ENCODE measurements at regions of chr4 and their contacts with region 1.

Region 1: DNA sequence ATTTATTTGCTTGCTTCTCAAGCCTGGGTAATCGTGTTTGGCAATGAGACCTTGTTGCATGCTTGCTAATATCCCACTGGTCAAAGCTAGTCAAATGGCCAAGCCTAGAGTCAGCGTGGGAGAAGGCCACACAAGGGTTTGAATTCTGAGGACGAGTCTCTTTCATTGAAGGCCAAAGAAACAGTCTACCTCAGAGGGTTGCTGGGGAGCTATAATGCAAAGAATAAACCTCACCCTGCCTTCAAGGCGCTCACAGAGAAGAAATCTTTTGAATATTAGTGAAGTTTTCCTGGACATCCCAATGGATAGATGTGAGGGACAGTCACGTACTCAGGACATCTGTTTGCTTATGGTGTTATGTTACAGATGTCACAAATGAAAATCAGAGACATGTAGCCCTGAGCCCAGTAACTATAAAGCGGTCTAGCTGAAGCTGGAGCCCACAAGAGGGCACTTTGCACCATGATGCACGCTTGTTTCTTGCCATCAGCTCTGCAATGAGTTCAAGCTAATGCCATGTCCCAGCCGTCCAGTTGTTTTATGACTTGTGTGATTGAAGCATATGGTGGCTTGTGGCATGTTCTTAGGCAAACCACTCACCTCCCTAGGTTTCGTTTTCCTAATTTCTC is 1.1 kb upstream of the TLR3 start:
- DNase-seq: peak in 1 of 2 experiments; percentile 70
- ATAC-seq: peak; percentile 95 to 98
- H3K4me3 ChIP-seq: peak overlapping the region; percentile 44; the same call in 2 of the 3 replicates
- H3K27ac ChIP-seq: no peak overlapping the region
- H3K4me1 ChIP-seq: no peaks in the 10 kb centered on the region
- CTCF ChIP-seq: peak; percentile 51
- EP300 ChIP-seq: no peak
- POLR2A ChIP-seq: no peak
- RAD21 ChIP-seq: peak; percentile 55 to 60

Region 2: DNA sequence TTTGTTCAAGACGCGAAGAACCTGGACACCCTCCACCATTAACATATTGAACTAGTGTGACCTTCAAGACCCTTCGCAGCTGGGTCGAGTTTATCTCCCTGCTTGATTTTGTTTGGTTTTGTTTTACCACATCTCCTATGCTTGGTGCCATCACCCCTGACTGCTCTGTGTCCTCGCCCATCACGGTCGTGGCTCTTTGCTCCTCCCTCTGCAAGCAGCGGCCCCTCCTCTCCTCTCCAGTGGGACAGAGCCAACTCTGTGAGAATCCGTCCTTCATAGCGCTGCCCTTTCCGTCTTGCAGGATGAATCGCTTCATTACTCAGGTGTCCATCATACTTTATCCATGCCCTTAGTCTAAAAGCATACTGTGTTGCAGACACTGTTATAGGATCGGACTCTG is 27.5 kb after region 1 on chr4:
- CTCF ChIA-PET with region 1: no interaction called
- POLR2A ChIA-PET with region 1: no interaction called
- DNase-seq: no peak
- ATAC-seq: no peak
- H3K4me3 ChIP-seq: no peak overlapping the region
- H3K27ac ChIP-seq: no peak overlapping the region
- H3K4me1 ChIP-seq: no peaks in the 10 kb centered on the region
- CTCF ChIP-seq: no peak
- EP300 ChIP-seq: no peak
- POLR2A ChIP-seq: no peak
- RAD21 ChIP-seq: no peak

Region 3: DNA sequence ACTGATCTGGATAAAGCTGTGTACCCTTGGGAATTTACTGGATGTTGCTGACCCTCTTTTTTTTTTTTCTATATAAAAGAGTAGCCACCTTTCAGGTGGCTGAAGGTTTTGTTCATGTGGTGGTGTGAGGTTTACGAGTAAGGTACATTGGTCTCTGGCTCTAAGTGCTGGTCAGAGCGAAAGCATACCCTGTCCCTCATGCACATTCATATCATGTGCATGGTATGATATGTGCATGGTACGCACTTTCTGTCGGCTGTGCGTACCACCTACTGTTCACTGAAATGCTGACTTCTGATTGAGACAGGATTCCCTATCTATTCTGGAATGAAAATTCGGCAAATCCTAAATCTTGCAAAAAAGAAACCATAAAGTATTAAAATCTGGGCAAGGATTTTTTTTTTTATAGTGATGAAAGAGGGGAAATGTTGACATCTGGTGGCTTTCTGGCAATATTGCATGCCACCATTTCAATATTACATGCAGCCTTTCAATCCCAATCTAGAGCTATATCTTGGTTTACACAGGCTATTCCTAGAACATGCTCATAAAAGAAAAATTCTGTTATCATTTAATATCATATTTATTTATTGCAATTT is 69.4 kb after region 1 on chr4:
- CTCF ChIA-PET with region 1: interaction called, 27 read pairs
- POLR2A ChIA-PET with region 1: no interaction called
- DNase-seq: peak; percentile 11
- ATAC-seq: peak in 1 of 2 experiments; percentile 48; a peak in 1 of 6 replicates
- H3K4me3 ChIP-seq: no peak overlapping the region
- H3K27ac ChIP-seq: no peak overlapping the region
- H3K4me1 ChIP-seq: no peaks in the 10 kb centered on the region
- CTCF ChIP-seq: peak; percentile 67
- EP300 ChIP-seq: no peak
- POLR2A ChIP-seq: no peak
- RAD21 ChIP-seq: peak; percentile 58 to 66

Region 4: DNA sequence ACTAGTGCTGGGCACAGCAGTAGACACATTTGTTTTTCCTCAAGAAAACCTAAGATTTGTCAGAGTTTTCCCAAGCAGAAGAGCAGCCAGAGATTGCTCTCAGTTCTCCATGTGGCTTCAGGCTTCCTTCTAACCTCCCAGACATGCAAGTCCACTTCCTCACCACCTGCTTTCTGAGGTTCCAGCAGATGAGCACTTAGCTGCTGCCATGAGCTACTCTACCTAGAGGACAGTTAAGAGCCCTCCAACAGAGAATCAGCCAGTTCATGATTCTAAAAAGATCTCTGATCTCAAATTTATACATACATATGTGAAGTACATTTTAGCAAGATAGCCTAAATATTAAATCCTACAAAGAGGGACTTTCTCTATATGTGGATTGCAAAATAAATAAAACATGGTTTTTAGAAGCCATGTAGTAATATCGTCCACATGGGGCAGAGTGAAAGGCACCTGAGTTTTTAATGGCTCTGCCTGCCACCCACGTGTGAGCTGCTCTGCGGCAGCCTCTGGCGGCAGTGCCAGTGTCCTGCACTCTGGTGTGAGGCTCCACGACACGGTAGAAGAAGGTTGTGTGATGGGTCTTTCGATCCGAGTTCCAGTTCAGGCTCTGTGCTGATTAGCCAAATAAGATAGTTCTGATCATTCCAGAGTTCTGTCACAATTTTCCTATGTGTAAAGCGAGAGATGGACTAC is 133.8 kb after region 1 on chr4:
- CTCF ChIA-PET with region 1: no interaction called
- POLR2A ChIA-PET with region 1: no interaction called
- DNase-seq: peak; percentile 64 to 67
- ATAC-seq: peak; percentile 98 to 100
- H3K4me3 ChIP-seq: no peak overlapping the region
- H3K27ac ChIP-seq: no peak overlapping the region
- H3K4me1 ChIP-seq: no peaks in the 10 kb centered on the region
- CTCF ChIP-seq: peak; percentile 45; the same call in 2 of the 3 replicates
- EP300 ChIP-seq: no peak
- POLR2A ChIP-seq: no peak
- RAD21 ChIP-seq: peak; percentile 16 to 46; a peak in 2 of 5 replicates